ENCODE measurements at regions of chr7 and their contacts with region 1.

Region 1: DNA sequence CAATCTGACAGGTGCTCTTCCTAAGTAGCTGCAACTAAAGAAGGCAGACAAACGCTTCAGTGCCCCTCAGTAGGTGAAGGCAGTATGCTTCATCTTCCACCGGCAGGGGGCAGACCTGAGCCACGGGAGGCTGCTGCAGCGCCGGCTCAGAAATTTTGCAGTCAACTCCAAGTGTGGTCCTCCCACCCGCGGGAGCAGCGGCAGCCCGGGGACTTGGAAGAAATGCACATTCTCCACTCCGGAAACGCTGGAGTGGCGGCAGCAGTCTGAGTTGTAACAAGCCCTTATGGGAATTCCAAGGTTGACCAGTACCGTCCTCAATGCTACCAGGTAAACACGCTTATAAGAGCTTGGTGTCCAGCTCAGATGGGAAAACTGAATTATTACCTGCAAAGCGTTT is 3.4 kb downstream of the IGFBP3 start:
- DNase-seq: peak; percentile 85
- H3K4me3 Mint-ChIP-seq: no peak overlapping the region
- H3K27ac Mint-ChIP-seq: no peak overlapping the region
- H3K4me1 Mint-ChIP-seq: peaks cover 22% of the 10 kb centered on the region
- H3K27me3 Mint-ChIP-seq: peaks cover 43% of the 10 kb centered on the region

Region 2: DNA sequence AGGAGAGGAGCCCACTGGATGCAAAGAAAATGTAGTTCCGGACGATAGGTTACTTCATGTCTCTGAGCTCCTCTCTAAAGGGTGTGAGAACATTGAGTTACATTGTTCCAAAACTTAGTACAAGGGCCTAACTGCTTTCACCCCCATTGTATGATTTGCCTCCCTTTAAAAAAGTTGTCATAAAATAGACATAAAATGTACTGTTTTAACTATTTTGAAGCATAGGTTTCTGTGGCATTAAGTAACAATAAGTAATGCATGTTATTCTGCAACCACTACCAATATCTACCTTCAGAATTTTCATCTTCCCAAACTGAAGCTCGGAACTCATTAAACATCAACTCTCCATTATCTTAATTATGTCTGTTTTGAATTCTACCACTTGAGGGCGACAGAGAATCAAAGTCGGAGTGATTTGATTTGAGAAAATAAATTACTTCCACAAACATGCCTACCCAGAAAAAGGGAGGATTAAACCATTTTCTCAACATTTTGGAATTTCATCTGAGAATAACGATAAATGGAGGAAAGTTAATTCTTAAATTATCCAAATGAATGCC is 26.7 kb before region 1 on chr7:
- CTCF ChIA-PET with region 1: interaction called, 4 read pairs
- intact Hi-C with region 1: loop called (anchors 1 kb)
- DNase-seq: no peak
- H3K4me3 Mint-ChIP-seq: no peak overlapping the region
- H3K27ac Mint-ChIP-seq: no peak overlapping the region
- H3K4me1 Mint-ChIP-seq: peaks cover 2% of the 10 kb centered on the region
- H3K27me3 Mint-ChIP-seq: peaks cover 50% of the 10 kb centered on the region

Region 3: GRCh38 chr7:46024263-46024916 is 106.7 kb after region 1 on chr7:
- CTCF ChIA-PET with region 1: no interaction called
- intact Hi-C with region 1: no loop called
- DNase-seq: no peak
- H3K4me3 Mint-ChIP-seq: no peak overlapping the region
- H3K27ac Mint-ChIP-seq: no peak overlapping the region
- H3K4me1 Mint-ChIP-seq: no peaks in the 10 kb centered on the region
- H3K27me3 Mint-ChIP-seq: no peaks in the 10 kb centered on the region

Region 4: DNA sequence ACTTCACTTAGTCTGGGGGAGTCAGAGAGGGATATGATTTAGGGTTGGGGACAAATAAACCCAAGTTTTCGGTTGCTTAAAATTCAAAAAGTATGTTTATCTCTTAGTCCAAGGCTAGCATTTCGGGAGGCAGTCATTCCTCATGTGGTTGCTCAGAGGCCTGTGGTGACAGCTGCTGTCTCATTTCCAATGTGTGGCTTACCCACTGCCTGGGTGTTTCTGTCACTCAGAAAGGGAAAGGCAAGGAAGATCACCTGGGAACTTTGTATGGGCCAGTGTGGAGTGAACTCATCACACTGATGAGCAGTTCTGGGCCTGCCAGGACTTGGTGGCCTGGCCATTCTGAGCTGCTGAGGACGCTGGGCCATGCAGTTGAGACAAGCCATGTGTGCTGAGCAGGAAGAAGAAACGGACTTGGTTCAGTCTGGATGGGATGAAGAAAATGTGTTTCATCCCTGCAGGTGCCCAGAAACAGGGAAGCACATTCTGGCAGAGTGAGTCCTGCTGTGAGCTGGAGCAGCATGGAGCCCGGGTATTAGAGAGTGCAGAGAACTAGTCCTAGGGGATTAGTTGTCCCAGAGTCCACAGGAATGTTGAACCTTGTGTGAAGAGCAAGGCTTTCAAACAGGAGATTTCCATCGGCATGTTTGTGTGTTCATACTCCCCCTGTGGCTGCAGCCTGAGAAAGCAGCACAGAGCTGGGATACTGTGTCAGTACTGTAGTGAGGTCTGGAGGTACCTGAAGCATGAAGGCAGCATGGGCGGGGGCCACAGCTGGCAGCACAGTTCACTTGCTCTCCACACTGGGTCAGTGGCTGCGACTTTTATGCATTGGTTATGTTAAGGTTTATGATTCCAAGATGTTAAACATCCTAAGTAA is 214.5 kb after region 1 on chr7:
- CTCF ChIA-PET with region 1: no interaction called
- intact Hi-C with region 1: no loop called
- DNase-seq: no peak
- H3K4me3 Mint-ChIP-seq: no peak overlapping the region
- H3K27ac Mint-ChIP-seq: no peak overlapping the region
- H3K4me1 Mint-ChIP-seq: no peaks in the 10 kb centered on the region
- H3K27me3 Mint-ChIP-seq: no peaks in the 10 kb centered on the region

Region 5: GRCh38 chr7:46352004-46352954 is 434.6 kb after region 1 on chr7:
- CTCF ChIA-PET with region 1: interaction called, 6 read pairs
- intact Hi-C with region 1: loop called (anchors 1 kb)
- DNase-seq: peak; percentile 42
- H3K4me3 Mint-ChIP-seq: no peak overlapping the region
- H3K27ac Mint-ChIP-seq: no peak overlapping the region
- H3K4me1 Mint-ChIP-seq: no peaks in the 10 kb centered on the region
- H3K27me3 Mint-ChIP-seq: peaks cover 5% of the 10 kb centered on the region

Region 6: GRCh38 chr7:47254081-47255006 is 1336.7 kb after region 1 on chr7:
- CTCF ChIA-PET with region 1: no interaction called
- intact Hi-C with region 1: loop called (anchors 2 kb)
- DNase-seq: peak; percentile 43
- H3K4me3 Mint-ChIP-seq: peak overlapping the region; percentile 29
- H3K27ac Mint-ChIP-seq: no peak overlapping the region
- H3K4me1 Mint-ChIP-seq: peaks cover 4% of the 10 kb centered on the region
- H3K27me3 Mint-ChIP-seq: peaks cover 24% of the 10 kb centered on the region

Region 7: DNA sequence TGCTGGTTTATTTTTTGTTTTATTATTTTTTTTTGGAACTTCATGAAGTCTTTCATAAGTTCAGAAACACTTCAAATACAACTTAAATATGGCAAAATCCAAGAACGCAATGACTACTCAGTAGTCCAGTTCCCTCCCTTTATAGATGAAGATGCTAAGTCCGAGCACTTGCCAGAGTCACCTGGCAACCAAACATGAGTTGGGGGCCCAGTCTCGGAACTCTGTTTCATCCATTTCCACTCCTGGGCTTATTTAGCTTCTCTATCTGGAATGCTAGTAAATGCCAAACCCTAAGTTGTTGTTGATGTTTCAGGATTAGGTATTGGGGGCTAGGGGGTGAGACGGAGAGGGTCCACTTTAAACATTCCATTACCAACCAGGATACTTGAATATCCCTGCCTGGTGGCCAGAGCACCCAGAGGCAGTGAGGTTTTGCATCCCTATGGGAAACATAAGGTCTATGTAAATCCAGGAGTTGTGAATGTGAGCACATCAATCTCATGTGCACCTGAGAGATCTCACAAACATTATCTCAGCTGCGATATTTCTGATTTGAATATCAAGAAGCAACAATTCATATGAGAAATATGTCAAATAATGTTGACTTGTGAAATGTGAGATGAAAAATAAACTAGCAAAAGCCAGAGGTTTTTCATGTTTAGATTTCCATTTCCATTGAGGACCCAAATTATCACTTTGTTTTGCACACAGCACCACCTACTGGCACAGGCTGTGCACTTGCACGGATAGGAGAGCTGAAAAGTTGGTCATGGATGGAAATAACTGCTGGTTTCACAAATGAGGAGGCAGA is 1901.3 kb after region 1 on chr7:
- CTCF ChIA-PET with region 1: no interaction called
- intact Hi-C with region 1: loop called (anchors 5 kb)
- DNase-seq: peak; percentile 74
- H3K4me3 Mint-ChIP-seq: no peak overlapping the region
- H3K27ac Mint-ChIP-seq: no peak overlapping the region
- H3K4me1 Mint-ChIP-seq: no peaks in the 10 kb centered on the region
- H3K27me3 Mint-ChIP-seq: no peaks in the 10 kb centered on the region